Activated CD4-positive, alpha-beta memory T cell treated with anti-CD3 and anti-CD28 coated beads, Interleukin-2, amount 10 ng/mL, durations not matched to agents 7 days and 5 days (primary cell): ENCODE measurements at regions of chr12 and their contacts with region 1.

Region 1: GRCh38 chr12:66169221-66170170 is at the start of gene TMBIM4:
- DNase-seq: peak; percentile 89
- H3K4me3 Mint-ChIP-seq: peak within 1 kb of the TSS; percentile 89
- H3K27ac Mint-ChIP-seq: peak within 1 kb of the TSS; percentile 99
- H3K4me1 Mint-ChIP-seq: peaks cover 46% of the 10 kb centered on the region
- H3K27me3 Mint-ChIP-seq: no peaks in the 10 kb centered on the region
- total RNA-seq, gene TMBIM4: 80.5 to 82.8 TPM

Region 2: DNA sequence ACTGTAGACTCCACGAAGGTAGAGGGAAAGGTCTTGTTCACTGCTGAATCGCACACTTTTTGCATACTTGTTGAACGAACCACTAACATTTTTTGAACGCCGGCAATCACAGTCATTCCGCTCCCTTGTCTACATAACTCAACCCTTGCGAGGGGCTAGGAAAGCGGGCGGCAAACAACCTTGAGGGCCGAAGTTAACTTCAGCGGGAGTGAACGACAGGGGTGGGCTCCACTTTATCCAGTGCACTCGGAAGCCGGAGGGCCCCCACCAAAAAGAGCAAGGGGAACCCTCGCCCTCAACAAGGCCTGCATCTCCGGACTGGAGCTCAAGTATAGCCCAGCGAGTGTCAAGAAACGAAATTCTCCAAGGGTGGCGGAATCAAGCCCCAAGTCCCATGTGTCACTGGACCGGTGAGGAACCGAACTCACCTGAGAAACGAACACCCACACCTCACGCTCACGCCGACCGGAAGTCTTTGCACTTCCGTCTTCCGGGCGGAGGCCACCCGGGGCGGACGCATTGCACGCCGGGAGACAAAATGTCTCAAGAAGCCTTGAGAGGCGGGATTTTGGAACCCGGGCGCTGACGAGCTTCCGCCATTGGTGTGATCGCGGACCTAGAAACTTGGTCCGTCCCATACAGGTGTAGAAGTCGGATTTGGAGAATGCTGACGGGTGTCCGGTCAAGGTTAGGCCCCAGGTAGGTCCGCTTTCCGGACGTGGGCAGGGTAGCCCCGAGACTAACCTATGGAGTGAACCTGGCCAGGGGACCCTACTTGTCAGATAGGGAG is 39.0 kb before region 1 on chr12 and contains the start of gene LLPH:
- CTCF ChIA-PET with region 1: interaction called, 18 read pairs
- POLR2A ChIA-PET with region 1: interaction called, 86 read pairs
- DNase-seq: peak; percentile 94
- H3K4me3 Mint-ChIP-seq: peak within 1 kb of the TSS; percentile 97
- H3K27ac Mint-ChIP-seq: peak within 1 kb of the TSS; percentile 94
- H3K4me1 Mint-ChIP-seq: peaks cover 67% of the 10 kb centered on the region
- H3K27me3 Mint-ChIP-seq: no peaks in the 10 kb centered on the region
- total RNA-seq, gene LLPH: 30.0 to 33.3 TPM

Region 3: DNA sequence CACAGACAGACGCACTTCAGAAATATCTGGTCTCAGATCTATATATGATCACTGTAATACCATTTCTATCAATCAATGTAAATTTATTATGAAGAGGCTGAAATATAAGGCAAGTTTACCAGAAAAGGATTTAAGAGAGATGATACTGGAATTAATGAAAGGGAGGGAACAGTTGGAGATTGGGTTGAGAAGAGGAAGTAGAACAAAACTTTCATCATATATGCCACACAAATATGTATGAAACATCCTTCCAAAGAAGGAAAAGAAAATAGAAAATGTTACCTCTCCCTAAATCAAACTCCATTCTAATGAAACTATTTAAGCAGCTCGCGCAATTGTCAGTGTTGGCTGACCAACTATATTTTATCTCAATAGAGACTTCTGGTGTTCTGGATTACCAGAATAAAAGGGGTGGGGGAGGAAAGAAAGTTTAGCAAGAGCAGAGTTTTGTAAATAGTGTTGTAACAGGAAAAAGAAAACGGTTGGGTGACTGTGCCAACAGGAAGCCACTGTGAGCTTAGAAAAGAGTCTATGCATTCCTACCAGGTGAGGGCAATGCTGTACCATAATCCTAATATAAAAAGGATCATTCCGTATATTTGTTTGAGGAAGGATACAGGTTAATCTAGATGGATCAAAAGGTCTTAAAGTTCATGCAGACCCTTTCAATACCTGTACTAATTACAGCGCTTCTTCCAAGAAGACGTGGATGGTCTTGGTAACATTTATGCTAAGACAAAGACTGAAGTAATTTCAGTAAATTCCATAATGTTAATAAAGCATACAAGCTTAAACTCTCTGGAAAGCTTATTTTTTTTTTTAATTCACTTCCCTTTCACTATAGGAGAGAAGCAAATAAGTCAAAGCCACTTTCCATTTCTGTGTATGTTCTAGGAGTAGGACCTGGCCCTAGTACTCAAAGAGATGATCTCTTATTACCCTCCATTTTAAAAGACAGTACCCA is 24.4 kb before region 1 on chr12:
- CTCF ChIA-PET with region 1: interaction called, 6 read pairs
- POLR2A ChIA-PET with region 1: interaction called, 40 read pairs
- DNase-seq: no peak
- H3K4me3 Mint-ChIP-seq: no peak overlapping the region
- H3K27ac Mint-ChIP-seq: peak overlapping the region; percentile 74
- H3K4me1 Mint-ChIP-seq: peaks cover 21% of the 10 kb centered on the region
- H3K27me3 Mint-ChIP-seq: no peaks in the 10 kb centered on the region

Region 4: DNA sequence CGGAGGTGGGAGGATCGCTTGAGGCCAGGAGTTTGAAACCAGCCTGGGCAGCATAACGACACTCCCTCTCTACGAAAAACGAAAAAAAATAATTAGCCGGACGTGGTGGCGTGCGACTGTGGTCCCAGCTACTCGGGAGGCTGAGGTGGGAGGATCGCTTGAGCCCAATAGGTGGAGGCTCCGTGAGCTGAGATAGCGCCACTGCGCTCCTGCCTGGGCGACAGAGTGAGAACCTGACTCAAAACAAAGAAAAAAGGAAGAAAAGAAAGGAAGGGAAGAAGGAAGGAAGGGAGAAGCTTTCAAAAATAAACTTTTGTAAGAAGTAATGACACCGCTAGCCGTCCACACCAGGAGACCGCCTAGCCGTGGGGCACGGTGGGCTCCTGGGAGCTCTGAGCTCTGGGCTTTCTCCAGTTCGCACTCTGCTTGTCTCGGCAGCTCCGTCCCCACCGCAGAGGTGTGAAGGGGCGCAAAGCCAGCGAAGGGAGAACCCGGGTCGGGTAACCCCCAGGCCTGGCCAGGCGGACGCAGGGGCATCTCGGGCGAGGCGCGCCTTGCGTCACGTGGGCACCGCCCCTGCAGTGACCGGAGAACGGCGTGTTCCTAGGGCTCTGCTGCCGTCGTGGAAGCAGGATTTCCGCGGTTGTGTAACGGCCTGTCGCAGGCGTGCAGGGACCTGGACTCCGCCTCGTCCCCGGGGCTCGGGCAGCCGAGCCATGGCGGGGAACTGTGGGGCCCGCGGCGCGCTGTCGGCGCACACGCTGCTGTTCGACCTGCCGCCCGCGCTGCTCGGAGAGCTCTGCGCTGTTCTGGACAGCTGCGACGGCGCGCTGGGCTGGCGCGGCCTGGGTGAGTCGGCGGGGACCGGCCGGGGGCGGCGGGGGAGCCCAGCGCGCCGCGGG is 19.3 kb after region 1 on chr12 and contains the start of gene IRAK3:
- CTCF ChIA-PET with region 1: interaction called, 3 read pairs
- POLR2A ChIA-PET with region 1: interaction called, 13 read pairs
- DNase-seq: peak; percentile 43
- H3K4me3 Mint-ChIP-seq: peak within 1 kb of the TSS; percentile 62
- H3K27ac Mint-ChIP-seq: no peak within 1 kb of the TSS
- H3K4me1 Mint-ChIP-seq: peaks cover 10% of the 10 kb centered on the region
- H3K27me3 Mint-ChIP-seq: peaks cover 44% of the 10 kb centered on the region
- total RNA-seq, gene IRAK3: 1.0 to 1.8 TPM

Region 5: GRCh38 chr12:66203820-66204219 is 34.3 kb after region 1 on chr12:
- CTCF ChIA-PET with region 1: interaction called, 4 read pairs
- POLR2A ChIA-PET with region 1: interaction called, 10 read pairs
- DNase-seq: no peak
- H3K4me3 Mint-ChIP-seq: no peak overlapping the region
- H3K27ac Mint-ChIP-seq: no peak overlapping the region
- H3K4me1 Mint-ChIP-seq: peaks cover 8% of the 10 kb centered on the region
- H3K27me3 Mint-ChIP-seq: peaks cover 12% of the 10 kb centered on the region